ENCODE measurements at regions of chr14 and their contacts with region 1.

Region 1: DNA sequence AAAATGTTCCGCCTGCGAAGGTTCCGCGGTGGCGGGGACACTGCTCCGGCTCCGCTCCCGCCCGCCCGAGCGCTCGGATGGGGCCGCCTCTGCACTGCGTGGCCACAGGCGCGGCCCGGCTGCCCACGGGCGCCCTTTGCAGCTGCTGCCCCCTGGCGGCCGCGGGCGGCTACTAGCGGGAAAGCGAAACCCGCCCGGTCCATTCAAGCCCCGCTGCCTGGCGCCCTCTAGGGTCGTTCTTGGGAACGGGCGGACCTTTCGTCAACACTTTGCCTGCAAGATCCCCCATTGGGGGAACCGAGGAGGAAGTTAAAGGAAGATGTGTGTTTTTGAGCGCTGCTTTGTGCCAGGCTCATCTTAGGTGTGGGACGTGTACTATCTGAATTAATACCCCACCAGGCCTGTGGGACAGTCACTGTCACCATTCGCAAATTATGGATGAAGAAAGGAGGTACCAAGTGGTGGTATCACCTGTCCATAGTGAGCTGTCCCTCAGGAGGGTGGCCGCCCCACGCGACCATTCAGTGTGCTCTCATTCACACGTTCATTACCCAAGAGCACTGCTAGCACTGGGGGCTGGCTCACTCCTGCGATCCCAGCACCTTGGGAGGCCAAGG is 19.4 kb downstream of the GPR132 start:
- DNase-seq: peak; percentile 58
- ATAC-seq: peak; percentile 81
- H3K4me3 ChIP-seq: peak overlapping the region in 1 of 3 experiments; percentile 37; a peak in 1 of 6 replicates
- H3K27ac ChIP-seq: no peak overlapping the region
- H3K4me1 ChIP-seq: peaks cover 12% of the 10 kb centered on the region
- H3K27me3 ChIP-seq: peaks cover 1 to 38% of the 10 kb centered on the region in 2 experiments; a peak in 4 of 5 replicates
- CTCF ChIP-seq: peak; percentile 98
- EP300 ChIP-seq: no peak
- POLR2A ChIP-seq: no peak
- RAD21 ChIP-seq: peak; percentile 100

Region 2: DNA sequence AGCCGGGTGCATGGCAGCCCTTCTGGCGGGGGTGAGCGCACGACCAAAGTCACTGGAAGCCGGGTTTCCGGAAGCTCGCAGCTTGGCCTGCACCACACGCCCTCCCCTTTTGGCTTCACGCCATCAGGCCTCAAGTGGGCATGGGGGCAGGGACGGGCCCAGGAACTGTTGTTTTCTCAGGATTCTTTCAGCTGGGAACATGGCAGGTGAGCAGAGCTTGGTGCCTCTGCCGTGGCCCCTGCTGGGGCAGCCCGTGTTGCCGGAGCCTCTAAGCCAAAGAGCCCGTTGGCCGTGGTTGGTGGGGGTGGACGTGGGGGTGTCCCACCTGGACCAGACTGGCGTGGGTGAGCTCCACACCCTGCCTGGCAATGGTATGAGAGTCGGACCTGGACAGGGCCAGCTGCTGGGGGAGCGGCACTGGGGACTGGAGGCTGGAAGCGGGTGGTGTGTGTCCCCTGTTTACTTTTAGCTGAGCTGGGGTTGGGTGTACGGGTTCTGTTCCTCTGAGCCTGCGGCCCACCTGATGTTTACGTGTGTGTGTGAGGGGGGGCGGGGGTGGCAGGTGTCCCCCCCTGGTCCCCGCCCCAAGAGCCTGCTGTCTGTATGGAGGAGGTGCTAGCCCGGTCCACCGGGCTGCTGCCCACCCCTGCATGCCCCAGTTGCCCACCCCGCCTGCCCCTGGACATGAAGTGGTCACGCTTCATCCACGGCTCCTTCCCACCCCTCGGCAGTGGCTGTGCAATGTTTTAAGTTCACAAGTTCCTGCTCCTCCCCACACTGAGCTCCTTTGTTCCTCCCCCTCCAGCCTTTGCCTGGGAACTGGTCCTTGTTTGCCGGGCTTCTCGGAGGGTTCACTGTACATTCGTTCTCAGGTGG is 149.8 kb before region 1 on chr14:
- CTCF ChIA-PET with region 1: interaction called, 10 read pairs
- POLR2A ChIA-PET with region 1: no interaction called
- in situ Hi-C with region 1: no loop called
- intact Hi-C with region 1: no loop called
- DNase-seq: no peak
- ATAC-seq: no peak
- H3K4me3 ChIP-seq: no peak overlapping the region
- H3K27ac ChIP-seq: no peak overlapping the region
- H3K4me1 ChIP-seq: peaks cover 9% of the 10 kb centered on the region; the same call in 1 of the 2 replicates
- H3K27me3 ChIP-seq: peaks cover 0 to 12% of the 10 kb centered on the region in 2 experiments; a peak in 3 of 5 replicates
- CTCF ChIP-seq: no peak
- EP300 ChIP-seq: no peak
- POLR2A ChIP-seq: no peak
- RAD21 ChIP-seq: no peak

Region 3: GRCh38 chr14:104976198-104977007 is 69.4 kb before region 1 on chr14:
- CTCF ChIA-PET with region 1: interaction called, 146 read pairs
- POLR2A ChIA-PET with region 1: interaction called, 3 read pairs
- in situ Hi-C with region 1: loop called (anchors 5 kb)
- intact Hi-C with region 1: loop called (anchors 1 kb)
- DNase-seq: peak; percentile 66
- ATAC-seq: peak; percentile 74
- H3K4me3 ChIP-seq: peak overlapping the region in 1 of 3 experiments; percentile 42; a peak in 1 of 6 replicates
- H3K27ac ChIP-seq: no peak overlapping the region
- H3K4me1 ChIP-seq: peaks cover 53% of the 10 kb centered on the region
- H3K27me3 ChIP-seq: peaks cover 12 to 82% of the 10 kb centered on the region in 2 experiments
- CTCF ChIP-seq: peak; percentile 97
- EP300 ChIP-seq: no peak
- POLR2A ChIP-seq: no peak
- RAD21 ChIP-seq: peak; percentile 96

Region 4: GRCh38 chr14:104998801-104999200 is 47.0 kb before region 1 on chr14:
- CTCF ChIA-PET with region 1: no interaction called
- POLR2A ChIA-PET with region 1: no interaction called
- in situ Hi-C with region 1: no loop called
- intact Hi-C with region 1: no loop called
- DNase-seq: no peak
- ATAC-seq: no peak
- H3K4me3 ChIP-seq: no peak overlapping the region
- H3K27ac ChIP-seq: no peak overlapping the region
- H3K4me1 ChIP-seq: no peaks in the 10 kb centered on the region
- H3K27me3 ChIP-seq: no peaks in the 10 kb centered on the region
- CTCF ChIP-seq: no peak
- EP300 ChIP-seq: no peak
- POLR2A ChIP-seq: no peak
- RAD21 ChIP-seq: no peak

Region 5: DNA sequence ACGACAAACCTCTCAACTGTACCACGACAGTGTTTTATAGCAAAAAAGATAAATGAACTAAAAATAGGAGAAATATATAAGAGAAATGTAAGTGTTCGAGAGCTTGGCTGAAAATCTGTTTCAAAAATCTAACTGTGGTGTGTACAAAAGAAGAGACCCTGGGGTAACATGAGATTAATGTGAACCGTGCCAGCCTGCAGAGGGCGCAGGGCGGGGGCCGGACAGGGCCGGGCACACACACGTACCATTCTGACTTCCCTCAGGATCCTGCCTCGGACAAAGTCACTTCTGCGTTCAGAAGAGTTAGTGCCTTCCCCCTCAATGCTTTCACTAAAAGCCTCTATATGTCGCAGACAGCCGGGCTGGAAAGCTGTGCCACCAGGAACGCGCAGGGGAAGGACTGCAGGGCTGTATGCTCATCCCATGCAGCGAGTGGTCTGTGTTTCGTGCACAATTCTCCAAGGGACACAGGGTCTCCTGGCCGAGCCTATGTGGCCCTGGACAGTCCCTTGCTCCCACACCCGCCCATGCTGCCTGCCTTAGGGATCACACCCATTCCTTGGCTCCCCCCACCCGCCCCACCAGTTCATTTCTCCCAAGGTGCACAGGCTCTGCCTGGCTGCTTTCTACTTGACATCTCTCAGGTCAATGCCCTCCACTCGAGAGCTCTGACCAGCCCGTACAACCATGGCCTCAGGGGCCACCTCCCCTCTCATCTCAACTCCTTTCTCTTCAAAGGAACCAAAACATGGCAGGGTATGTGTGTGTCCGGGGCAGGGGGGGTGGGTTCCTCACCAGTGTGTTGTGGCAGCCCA is 33.4 kb before region 1 on chr14:
- CTCF ChIA-PET with region 1: interaction called, 16 read pairs
- POLR2A ChIA-PET with region 1: no interaction called
- in situ Hi-C with region 1: no loop called
- intact Hi-C with region 1: no loop called
- DNase-seq: no peak
- ATAC-seq: peak; percentile 22; the same call in 2 of the 3 replicates
- H3K4me3 ChIP-seq: no peak overlapping the region
- H3K27ac ChIP-seq: no peak overlapping the region
- H3K4me1 ChIP-seq: peaks cover 37% of the 10 kb centered on the region
- H3K27me3 ChIP-seq: no peaks in the 10 kb centered on the region
- CTCF ChIP-seq: no peak
- EP300 ChIP-seq: no peak
- POLR2A ChIP-seq: no peak
- RAD21 ChIP-seq: no peak

Region 6: GRCh38 chr14:105020815-105021655 is 24.8 kb before region 1 on chr14 and contains the start of gene CDCA4:
- CTCF ChIA-PET with region 1: interaction called, 20 read pairs
- POLR2A ChIA-PET with region 1: interaction called, 7 read pairs
- in situ Hi-C with region 1: no loop called
- intact Hi-C with region 1: loop called (anchors 2 kb)
- DNase-seq: peak; percentile 88
- ATAC-seq: peak; percentile 91
- H3K4me3 ChIP-seq: peak within 1 kb of the TSS; percentile 69 to 86 (median 81)
- H3K27ac ChIP-seq: peak within 1 kb of the TSS; percentile 74
- H3K4me1 ChIP-seq: peaks cover 62% of the 10 kb centered on the region
- H3K27me3 ChIP-seq: no peaks in the 10 kb centered on the region; a peak in 1 of 5 replicates
- CTCF ChIP-seq: no peak; the same call in 1 of the 2 replicates
- EP300 ChIP-seq: no peak
- POLR2A ChIP-seq: peak; percentile 63 to 74; a peak in 3 of 4 replicates
- RAD21 ChIP-seq: peak; percentile 51; the same call in 1 of the 2 replicates
- total RNA-seq, gene CDCA4: 42.1 and 43.1 TPM in 2 replicates

Region 7: DNA sequence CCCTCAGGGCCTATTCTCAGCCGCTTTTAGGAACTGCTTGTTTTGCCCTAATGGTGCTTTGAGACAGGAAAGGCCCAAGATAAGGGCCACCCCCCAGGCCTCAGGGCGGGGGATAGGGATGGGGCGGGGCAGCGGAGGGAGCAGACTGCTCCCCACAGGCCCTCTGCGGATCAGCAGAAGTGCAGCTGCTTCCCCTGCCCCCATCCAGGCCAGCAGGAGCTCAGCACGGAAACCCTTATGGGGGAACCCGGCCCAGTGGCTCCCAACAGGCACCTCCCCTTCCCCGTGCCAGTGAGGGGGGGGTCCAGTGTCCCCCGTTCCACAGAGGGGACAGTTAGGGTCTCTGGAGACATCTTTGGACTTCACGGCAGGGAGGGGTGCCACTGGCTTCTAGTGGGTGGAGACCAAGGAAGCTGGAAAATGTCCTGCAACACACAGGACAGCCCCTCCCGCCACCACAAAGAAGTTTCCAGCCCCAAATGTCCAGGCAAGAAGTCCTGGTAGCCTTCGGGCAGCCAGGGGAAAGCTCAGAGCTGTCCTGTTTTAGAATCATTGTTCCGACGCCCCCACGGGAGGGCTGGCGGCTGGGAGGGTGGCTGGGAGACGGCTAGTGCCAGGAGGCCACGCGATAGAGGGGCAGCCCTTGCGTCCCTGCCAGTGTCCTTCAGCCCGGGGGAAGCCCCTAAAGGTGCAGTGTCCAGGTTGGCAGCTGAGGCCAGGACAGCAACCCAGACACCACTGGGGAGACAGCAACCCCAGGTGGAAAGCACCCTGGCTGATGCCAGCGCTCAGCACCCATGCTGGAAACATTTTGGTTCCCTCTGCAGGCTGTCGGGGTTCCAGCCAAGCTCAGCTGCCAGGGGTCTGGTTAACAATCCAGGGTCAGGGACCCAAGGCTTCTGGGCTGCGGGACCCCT is 29.8 kb after region 1 on chr14:
- CTCF ChIA-PET with region 1: no interaction called
- POLR2A ChIA-PET with region 1: no interaction called
- in situ Hi-C with region 1: no loop called
- intact Hi-C with region 1: no loop called
- DNase-seq: no peak
- ATAC-seq: no peak
- H3K4me3 ChIP-seq: no peak overlapping the region
- H3K27ac ChIP-seq: no peak overlapping the region
- H3K4me1 ChIP-seq: no peaks in the 10 kb centered on the region
- H3K27me3 ChIP-seq: peaks cover 10 to 63% of the 10 kb centered on the region in 2 experiments; a peak in 4 of 5 replicates
- CTCF ChIP-seq: no peak
- EP300 ChIP-seq: no peak
- POLR2A ChIP-seq: no peak
- RAD21 ChIP-seq: no peak

Region 8: DNA sequence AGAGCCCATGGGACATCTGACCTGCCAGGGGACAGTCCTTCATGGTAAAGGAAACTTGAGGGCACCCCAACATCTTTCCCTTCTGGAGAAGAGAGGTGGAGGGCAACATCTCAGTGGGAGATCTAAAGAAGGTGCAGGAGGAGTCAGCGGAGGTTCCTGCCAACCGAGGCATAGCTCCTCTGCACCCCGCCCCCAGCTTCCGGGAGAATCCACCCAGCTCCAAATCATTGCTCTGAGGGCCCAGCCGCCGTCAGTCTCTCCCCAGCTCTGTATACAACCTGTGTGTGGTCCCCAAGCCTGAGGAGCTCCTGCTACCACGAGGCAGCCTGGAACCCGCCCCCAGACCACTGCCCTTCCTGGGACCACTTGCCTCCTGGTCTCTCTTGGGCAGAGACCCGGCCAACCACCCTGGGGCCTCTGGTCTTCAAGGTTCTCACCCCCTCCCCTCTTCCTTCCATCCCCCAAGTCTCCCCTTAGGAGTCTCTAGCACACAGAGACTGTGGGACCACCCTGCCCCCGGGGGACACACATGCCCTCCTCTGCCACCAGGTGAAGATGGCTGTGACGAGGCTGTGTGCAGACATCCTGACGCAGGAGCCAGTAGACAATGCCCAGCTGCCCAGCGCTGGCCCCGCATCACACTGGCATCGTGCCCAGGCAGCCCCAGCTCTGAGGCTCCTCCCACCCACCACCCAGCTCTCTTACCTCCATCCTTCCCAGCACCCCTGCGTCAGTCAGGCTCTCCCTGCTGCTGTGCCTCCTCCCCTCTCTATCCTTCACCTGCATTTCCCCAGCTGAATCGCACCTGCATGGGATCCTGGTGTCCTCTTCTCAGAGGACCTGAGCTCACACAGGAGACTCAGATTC is 148.3 kb after region 1 on chr14:
- CTCF ChIA-PET with region 1: no interaction called
- POLR2A ChIA-PET with region 1: no interaction called
- in situ Hi-C with region 1: no loop called
- intact Hi-C with region 1: no loop called
- DNase-seq: no peak
- ATAC-seq: no peak
- H3K4me3 ChIP-seq: no peak overlapping the region
- H3K27ac ChIP-seq: no peak overlapping the region
- H3K4me1 ChIP-seq: peaks cover 31% of the 10 kb centered on the region
- H3K27me3 ChIP-seq: peaks cover 26 to 70% of the 10 kb centered on the region in 2 experiments
- CTCF ChIP-seq: no peak
- EP300 ChIP-seq: no peak
- POLR2A ChIP-seq: no peak
- RAD21 ChIP-seq: no peak